Activated CD4-positive, alpha-beta T cell treated with anti-CD3 and anti-CD28 coated beads for 36 hours (primary cell): ENCODE measurements at regions of chr9 and their contacts with region 1.

Region 1: GRCh38 chr9:26112724-26113123 is 434.5 kb upstream of the TUSC1 start:
- DNase-seq: no peak
- ATAC-seq: no peak
- H3K4me3 Mint-ChIP-seq: no peak overlapping the region
- H3K27ac Mint-ChIP-seq: no peak overlapping the region
- H3K4me1 Mint-ChIP-seq: no peaks in the 10 kb centered on the region
- H3K27me3 Mint-ChIP-seq: no peaks in the 10 kb centered on the region

Region 2: GRCh38 chr9:25813478-25813877 is 299.2 kb before region 1 on chr9:
- CTCF ChIA-PET with region 1: no interaction called
- POLR2A ChIA-PET with region 1: no interaction called
- intact Hi-C with region 1: no loop called
- DNase-seq: no peak
- ATAC-seq: no peak
- H3K4me3 Mint-ChIP-seq: no peak overlapping the region
- H3K27ac Mint-ChIP-seq: no peak overlapping the region
- H3K4me1 Mint-ChIP-seq: no peaks in the 10 kb centered on the region
- H3K27me3 Mint-ChIP-seq: no peaks in the 10 kb centered on the region

Region 3: GRCh38 chr9:26054600-26055520 is 57.9 kb before region 1 on chr9:
- CTCF ChIA-PET with region 1: no interaction called
- POLR2A ChIA-PET with region 1: no interaction called
- intact Hi-C with region 1: loop called in 1 of 2 experiments (anchors 10 kb)
- DNase-seq: no peak
- ATAC-seq: no peak
- H3K4me3 Mint-ChIP-seq: no peak overlapping the region
- H3K27ac Mint-ChIP-seq: no peak overlapping the region
- H3K4me1 Mint-ChIP-seq: no peaks in the 10 kb centered on the region
- H3K27me3 Mint-ChIP-seq: no peaks in the 10 kb centered on the region